ENCODE measurements at regions of chr22 and their contacts with region 1.

Region 1: GRCh38 chr22:42642806-42643633 is 2.6 kb upstream of the ATP5MGL start:
- DNase-seq: no peak
- ATAC-seq: no peak
- H3K4me3 ChIP-seq: peak overlapping the region in 1 of 3 experiments; percentile 100; a peak in 2 of 6 replicates
- H3K27ac ChIP-seq: peak overlapping the region; percentile 88
- H3K4me1 ChIP-seq: peaks cover 93% of the 10 kb centered on the region
- H3K27me3 ChIP-seq: no peaks in the 10 kb centered on the region
- CTCF ChIP-seq: no peak
- EP300 ChIP-seq: no peak
- POLR2A ChIP-seq: no peak
- RAD21 ChIP-seq: no peak

Region 2: DNA sequence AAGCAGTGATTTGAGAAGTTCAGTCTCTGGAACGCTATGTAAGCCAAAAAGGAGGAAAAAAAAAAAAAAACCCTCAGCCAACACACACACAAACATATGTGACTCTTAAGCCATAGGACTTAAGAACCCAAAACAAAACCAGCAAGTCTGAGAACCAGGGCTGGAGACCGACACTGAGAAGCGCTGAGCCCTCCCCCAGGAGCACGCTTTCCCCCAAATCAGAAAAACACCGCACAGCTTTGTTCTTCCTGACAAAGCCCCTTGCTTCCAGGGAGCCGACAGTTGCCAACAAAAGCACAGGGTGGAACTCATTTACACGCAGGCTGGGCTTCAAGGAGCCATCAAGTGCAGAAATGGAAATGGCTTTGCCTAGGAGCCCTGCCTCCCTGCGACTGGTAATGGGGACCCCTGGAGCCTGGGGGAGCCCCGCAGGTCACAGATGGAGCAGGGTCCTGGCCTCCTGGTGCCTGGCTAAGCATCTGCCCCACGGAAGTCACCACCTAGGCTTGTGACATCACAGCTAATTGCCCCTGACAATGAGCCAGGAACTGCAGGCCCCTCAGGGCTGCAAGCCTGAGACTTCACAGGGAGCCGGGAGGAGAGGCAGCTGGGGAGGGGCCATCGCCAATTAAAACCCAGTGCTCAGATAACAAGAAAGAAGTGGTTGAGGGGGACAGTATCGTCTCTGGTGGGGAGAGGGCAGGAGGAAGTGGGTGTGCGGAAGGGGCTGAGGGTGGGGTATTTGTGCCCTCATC is 277.7 kb before region 1 on chr22:
- CTCF ChIA-PET with region 1: no interaction called
- POLR2A ChIA-PET with region 1: no interaction called
- in situ Hi-C with region 1: no loop called
- intact Hi-C with region 1: no loop called
- DNase-seq: no peak
- ATAC-seq: no peak
- H3K4me3 ChIP-seq: no peak overlapping the region
- H3K27ac ChIP-seq: no peak overlapping the region
- H3K4me1 ChIP-seq: peaks cover 21% of the 10 kb centered on the region
- H3K27me3 ChIP-seq: peaks cover 13 to 51% of the 10 kb centered on the region in 2 experiments; a peak in 4 of 5 replicates
- CTCF ChIP-seq: no peak
- EP300 ChIP-seq: no peak
- POLR2A ChIP-seq: no peak
- RAD21 ChIP-seq: no peak

Region 3: GRCh38 chr22:42632096-42632495 is 10.9 kb before region 1 on chr22:
- CTCF ChIA-PET with region 1: interaction called, 4 read pairs
- POLR2A ChIA-PET with region 1: interaction called, 14 read pairs
- in situ Hi-C with region 1: no loop called
- intact Hi-C with region 1: no loop called
- DNase-seq: peak; percentile 47
- ATAC-seq: peak; percentile 62
- H3K4me3 ChIP-seq: no peak overlapping the region
- H3K27ac ChIP-seq: peak overlapping the region; percentile 32
- H3K4me1 ChIP-seq: peaks cover 24% of the 10 kb centered on the region
- H3K27me3 ChIP-seq: no peaks in the 10 kb centered on the region
- CTCF ChIP-seq: peak; percentile 49; the same call in 1 of the 2 replicates
- EP300 ChIP-seq: no peak
- POLR2A ChIP-seq: no peak; a peak in 1 of 4 replicates
- RAD21 ChIP-seq: peak; percentile 60

Measured in HepG2 (cell line).